Psoas muscle (tissue), 8 donors: ENCODE measurements at regions of chr5 and their contacts with region 1.

Region 1: GRCh38 chr5:113513384-113514288 is at the start of gene YTHDC2:
- DNase-seq: peak; percentile 89 to 94
- ATAC-seq: peak; percentile 97 to 99 (median 98)
- H3K4me3 ChIP-seq: peak within 1 kb of the TSS; percentile 87
- H3K27ac ChIP-seq: peak within 1 kb of the TSS; percentile 91
- H3K4me1 ChIP-seq: peaks cover 17% of the 10 kb centered on the region
- H3K27me3 ChIP-seq: no peaks in the 10 kb centered on the region
- CTCF ChIP-seq: peak; percentile 28
- total RNA-seq, gene YTHDC2: 11.0 to 19.1 (median 16.2) TPM

Region 2: GRCh38 chr5:112228667-112229066 is 1285.0 kb before region 1 on chr5:
- intact Hi-C with region 1: no loop called
- DNase-seq: peak; percentile 41 to 62
- ATAC-seq: peak; percentile 40 to 59 (median 58)
- H3K4me3 ChIP-seq: no peak overlapping the region
- H3K27ac ChIP-seq: no peak overlapping the region
- H3K4me1 ChIP-seq: peaks cover 6% of the 10 kb centered on the region
- H3K27me3 ChIP-seq: no peaks in the 10 kb centered on the region
- CTCF ChIP-seq: no peak

Region 3: DNA sequence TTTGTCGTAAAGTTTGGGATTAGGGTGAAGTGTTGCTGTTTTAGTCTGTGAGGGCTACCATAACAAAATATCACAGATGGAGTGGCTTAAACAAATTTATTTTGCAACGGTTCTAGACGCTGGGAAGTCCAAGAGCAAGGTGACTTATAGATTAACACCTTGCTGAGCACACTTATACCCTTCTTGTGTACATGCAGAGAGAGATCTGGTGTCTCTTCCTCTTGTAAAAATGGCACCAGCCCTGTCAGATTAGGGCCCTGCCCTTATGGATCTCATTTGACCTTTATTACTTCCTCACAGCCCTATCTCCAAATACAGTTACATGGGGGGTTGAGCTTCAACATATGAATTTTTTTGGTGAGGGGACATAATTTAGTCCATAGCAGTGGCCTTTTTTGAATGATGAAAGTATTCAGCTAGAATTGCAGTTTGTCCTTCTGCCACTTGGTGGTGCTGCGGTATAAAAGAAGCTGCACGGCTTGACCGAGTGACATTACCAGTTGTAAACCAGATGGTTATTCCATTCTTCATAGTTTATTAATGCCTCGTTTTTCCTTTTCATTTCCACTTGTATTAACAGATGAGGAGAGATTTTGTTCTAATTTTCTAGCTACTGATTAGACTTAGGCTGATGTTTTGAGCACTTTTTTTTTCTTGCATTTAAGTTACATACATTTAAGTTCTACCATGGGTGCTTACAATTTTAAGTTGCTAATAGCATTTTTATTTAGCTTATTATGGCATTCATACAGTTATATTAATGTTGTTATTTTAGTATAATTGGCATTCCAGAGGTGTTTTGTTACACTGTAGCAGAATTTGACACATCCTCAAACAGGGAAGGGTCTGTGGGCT is 517.6 kb before region 1 on chr5:
- intact Hi-C with region 1: loop called (anchors 5 kb)
- DNase-seq: peak; percentile 45 to 64
- ATAC-seq: peak; percentile 76 to 94 (median 85)
- H3K4me3 ChIP-seq: no peak overlapping the region
- H3K27ac ChIP-seq: no peak overlapping the region
- H3K4me1 ChIP-seq: no peaks in the 10 kb centered on the region
- H3K27me3 ChIP-seq: no peaks in the 10 kb centered on the region
- CTCF ChIP-seq: peak; percentile 91

Region 4: GRCh38 chr5:113204525-113205161 is 309.0 kb before region 1 on chr5:
- intact Hi-C with region 1: loop called in 1 of 2 experiments (anchors 10 kb)
- DNase-seq: peak; percentile 66 to 79
- ATAC-seq: peak; percentile 72 to 84 (median 82)
- H3K4me3 ChIP-seq: peak overlapping the region; percentile 24
- H3K27ac ChIP-seq: no peak overlapping the region
- H3K4me1 ChIP-seq: peaks cover 17% of the 10 kb centered on the region
- H3K27me3 ChIP-seq: no peaks in the 10 kb centered on the region
- CTCF ChIP-seq: no peak

Region 5: GRCh38 chr5:113378959-113379541 is 134.6 kb before region 1 on chr5:
- intact Hi-C with region 1: loop called (anchors 2 to 5 kb)
- DNase-seq: peak in 1 of 2 donors; percentile 25
- ATAC-seq: peak; percentile 42 to 75 (median 60)
- H3K4me3 ChIP-seq: no peak overlapping the region
- H3K27ac ChIP-seq: no peak overlapping the region
- H3K4me1 ChIP-seq: no peaks in the 10 kb centered on the region
- H3K27me3 ChIP-seq: no peaks in the 10 kb centered on the region
- CTCF ChIP-seq: peak; percentile 74

Region 6: GRCh38 chr5:113487781-113488644 is 25.6 kb before region 1 on chr5 and contains the start of gene MCC:
- intact Hi-C with region 1: loop called in 1 of 2 experiments (anchors 2 kb)
- DNase-seq: peak; percentile 75 to 77
- ATAC-seq: peak; percentile 66 to 85 (median 76)
- H3K4me3 ChIP-seq: peak within 1 kb of the TSS; percentile 71
- H3K27ac ChIP-seq: no peak within 1 kb of the TSS
- H3K4me1 ChIP-seq: peaks cover 5% of the 10 kb centered on the region
- H3K27me3 ChIP-seq: peaks cover 0 to 64% (median 10%) of the 10 kb centered on the region in 3 donors
- CTCF ChIP-seq: no peak
- total RNA-seq, gene MCC: 4.4 to 13.8 (median 9.4) TPM